Left ventricle myocardium inferior (tissue), 1 donor: ENCODE measurements at regions of chr6 and their contacts with region 1.

Region 1: DNA sequence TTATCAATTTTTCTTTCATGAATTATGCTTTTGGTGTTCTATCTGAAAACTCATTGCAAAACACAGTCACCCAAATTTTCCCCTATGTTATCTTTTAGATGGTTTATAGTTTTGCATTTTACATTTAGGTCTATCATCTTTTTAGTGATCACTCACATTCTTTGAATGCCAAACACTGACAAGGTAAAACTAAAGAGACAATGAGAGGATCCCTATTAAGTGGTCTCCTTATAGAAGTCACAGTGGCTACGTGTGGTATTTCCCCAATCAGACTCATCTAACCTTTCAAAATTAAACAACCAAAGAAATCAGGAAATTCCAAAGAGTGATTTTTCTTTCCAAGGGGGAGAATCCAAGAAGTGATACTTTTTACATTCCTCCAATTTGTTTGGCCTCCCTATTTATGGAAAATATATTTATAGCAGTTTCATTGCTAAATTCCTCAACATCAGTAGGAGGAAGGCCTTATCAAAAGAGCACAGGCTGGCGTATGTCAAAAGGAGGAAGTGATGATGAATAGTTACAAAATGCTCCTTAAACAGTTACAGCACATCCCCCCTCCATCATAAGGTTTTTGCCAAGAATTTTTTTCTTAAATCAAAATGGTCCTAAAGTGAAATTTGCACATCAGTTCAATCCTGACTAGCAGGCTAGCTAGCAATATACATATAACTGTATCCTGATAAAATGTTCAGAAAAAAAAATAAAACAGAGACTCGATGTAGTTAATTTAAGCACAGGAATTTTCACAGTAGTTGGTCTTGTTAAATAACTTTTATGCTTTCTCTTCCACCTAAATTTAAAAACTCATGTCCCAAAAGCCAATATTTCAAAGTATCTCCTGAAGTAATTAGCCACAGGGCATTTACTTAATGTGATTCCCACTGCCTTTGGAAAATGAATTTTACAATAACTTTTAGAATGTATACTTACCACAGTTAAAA is 76.2 kb upstream of the IPCEF1 start:
- DNase-seq: no peak
- H3K4me3 ChIP-seq: no peak overlapping the region
- H3K27ac ChIP-seq: peak overlapping the region; percentile 64
- H3K4me1 ChIP-seq: peaks cover 58% of the 10 kb centered on the region
- H3K27me3 ChIP-seq: no peaks in the 10 kb centered on the region
- CTCF ChIP-seq: no peak

Region 2: DNA sequence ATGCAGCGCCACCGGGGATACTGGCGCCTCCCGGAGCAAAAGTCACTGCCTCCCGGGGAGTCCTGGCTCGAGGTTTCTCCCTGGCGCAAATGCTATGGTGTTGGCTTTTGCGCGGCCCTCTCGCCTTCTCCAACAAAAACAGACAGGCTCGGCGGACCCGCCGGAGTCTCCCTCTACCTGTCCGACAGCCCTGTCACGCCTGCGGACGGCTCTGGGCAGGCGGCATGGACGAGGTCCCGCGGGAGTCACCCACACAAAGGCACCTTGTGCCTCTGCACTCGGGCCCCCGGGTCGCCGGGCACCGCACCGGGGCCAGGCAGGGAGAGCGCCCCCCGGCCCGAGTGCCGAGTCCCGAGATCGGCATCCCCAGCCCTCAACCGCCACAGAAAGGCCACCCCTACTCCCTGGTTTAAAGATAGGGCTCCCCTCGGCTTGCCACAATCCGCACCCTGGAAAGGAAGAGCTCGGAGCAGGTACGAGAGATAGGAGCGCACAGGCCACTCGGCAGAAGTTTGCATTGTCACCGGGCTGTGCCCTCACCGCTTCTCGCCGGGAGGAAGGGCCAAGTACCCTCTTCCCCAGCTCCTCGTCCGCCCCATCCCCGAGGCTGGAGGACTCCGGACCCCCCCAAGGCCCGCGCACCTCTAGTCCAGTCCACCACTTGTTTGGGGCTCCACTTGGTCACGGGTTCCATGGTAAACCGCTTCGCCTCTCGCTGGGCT is 76.8 kb after region 1 on chr6:
- intact Hi-C with region 1: loop called (anchors 10 kb)
- DNase-seq: peak; percentile 21
- H3K4me3 ChIP-seq: peak overlapping the region; percentile 94
- H3K27ac ChIP-seq: peak overlapping the region; percentile 97
- H3K4me1 ChIP-seq: peaks cover 54% of the 10 kb centered on the region
- H3K27me3 ChIP-seq: no peaks in the 10 kb centered on the region
- CTCF ChIP-seq: no peak

Region 3: DNA sequence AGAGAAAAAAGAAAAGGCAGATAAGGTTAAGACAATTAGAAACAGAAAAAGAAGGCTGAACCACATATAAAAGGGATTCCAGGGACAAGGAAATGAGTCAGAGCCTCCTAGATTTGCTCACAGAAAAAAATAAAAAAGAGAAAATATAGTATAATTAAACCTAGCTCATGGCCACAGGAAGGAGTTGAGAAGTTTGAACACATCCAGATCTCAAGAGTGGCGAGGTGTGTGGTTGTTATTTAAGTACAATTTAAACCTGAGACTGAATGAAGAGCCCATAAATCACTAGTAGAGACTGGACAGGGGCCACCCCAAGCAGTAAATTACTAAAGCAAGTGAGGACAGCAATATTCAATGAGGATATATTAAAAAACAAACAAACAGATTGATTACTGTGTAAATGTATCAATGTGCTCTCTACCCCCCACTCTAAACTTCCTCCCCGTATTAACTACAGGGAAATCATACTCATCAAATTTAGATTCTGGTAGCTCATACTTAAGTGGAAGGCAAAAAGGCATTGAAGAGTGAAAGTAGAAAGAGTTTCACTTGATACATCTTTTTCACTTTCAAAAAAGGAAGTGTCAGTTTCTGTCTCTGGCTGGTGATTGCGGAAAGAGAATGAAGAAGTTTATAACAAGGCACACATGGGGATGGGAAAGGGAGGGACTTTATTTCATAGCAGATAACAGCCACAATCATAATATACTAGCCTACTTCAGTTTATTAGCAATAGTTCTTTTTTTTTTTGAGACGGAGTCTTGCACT is 251.1 kb after region 1 on chr6:
- intact Hi-C with region 1: no loop called
- DNase-seq: no peak
- H3K4me3 ChIP-seq: no peak overlapping the region
- H3K27ac ChIP-seq: no peak overlapping the region
- H3K4me1 ChIP-seq: no peaks in the 10 kb centered on the region
- H3K27me3 ChIP-seq: no peaks in the 10 kb centered on the region
- CTCF ChIP-seq: no peak